Posterior vena cava (tissue), 2 donors: ENCODE measurements at regions of chr5 and their contacts with region 1.

Region 1: DNA sequence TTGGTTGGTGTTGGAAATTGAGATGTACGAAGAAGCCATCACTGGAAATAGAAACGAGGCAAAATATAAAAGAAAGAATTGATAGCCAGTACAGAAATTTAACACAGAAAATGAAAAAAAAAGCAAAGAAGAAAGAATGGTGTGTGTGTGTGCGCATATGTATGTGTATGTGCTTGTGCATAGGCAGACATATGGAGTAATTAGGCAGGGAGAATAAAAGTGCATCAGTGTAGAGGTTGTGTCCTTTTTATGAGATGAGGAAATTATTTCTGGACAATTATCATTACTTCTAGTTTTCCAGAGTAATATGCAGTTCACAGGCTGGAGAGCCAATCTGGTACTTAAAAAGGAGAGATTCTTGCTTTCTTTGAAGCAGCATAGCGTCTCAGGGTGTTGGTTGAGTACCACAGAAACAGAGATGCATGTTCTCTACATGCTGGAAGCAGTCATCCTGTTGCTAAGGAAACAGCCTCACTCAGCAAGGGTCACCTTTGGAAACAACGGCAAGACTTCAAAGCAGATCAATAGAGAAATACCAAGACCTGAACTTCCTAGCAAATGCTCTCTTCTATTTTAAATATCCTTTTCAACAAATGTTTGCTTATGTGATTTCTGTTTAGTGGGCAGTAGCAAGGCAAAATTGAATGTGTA is 172.7 kb downstream of the TAF11L14 start:
- DNase-seq: no peak

Region 2: DNA sequence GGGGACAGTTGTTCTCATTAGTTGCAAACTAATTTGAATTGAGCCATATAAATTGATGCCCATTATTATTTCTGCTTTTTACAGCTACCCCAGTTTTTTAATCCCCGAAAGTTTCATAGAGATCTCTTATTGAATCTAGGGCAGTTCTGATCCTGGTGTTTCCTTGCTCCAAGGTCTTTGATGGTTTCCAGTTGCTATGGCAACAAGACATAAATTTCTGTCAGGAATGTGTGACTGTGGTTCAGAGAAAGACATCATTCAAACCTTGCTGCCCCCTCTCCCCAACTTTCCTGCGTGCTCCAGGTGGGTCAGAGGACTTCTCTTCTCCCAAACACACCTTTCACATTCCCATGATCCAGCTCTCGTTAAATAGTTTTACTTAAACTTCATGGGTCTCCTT is 109.3 kb before region 1 on chr5:
- intact Hi-C with region 1: no loop called
- DNase-seq: no peak

Region 3: DNA sequence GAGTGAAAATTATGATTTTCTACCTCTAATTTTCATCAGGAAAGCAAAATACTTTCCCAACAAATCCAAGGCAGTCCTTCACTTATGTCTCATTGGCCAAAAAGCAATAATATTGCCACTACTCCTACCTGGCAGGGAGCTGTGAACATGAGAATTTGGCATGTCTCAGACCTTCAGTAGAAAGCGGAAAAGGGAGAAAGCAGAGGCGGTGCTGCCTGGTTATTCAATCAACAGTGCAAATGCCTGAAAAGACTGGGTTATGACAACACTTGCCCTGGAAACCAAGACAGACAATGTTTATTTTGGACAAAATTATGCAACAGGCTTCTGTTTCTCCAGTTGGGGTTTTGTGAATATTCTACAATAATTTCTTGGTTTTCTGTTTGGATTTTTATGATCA is 21.7 kb after region 1 on chr5:
- intact Hi-C with region 1: loop called in 1 of 2 experiments (anchors 1 kb)
- DNase-seq: no peak

Region 4: DNA sequence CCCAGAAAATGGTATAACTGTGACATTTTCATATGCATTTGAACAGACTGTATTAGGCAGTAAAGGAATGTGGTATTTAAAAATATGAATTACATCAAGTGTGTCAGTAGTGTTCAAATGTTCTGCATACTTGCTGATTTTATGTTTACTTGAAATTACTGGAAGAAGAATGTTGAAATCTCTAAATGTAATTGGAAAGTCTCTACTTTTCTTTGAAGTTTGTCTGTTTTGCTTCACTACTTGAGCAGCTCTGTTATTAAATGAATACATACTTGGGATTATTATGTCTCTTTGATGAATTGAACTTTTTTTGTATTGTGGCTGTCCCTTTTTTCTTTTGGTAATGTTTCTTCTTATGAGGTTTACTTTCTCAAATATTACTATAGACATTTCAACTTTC is 32.9 kb after region 1 on chr5:
- intact Hi-C with region 1: no loop called
- DNase-seq: no peak